ENCODE measurements at regions of chr9 and their contacts with region 1.

Region 1: GRCh38 chr9:120635011-120635410 is 55.0 kb upstream of the CDK5RAP2 start:
- DNase-seq: no peak
- H3K4me3 ChIP-seq: no peak overlapping the region
- H3K27ac ChIP-seq: no peak overlapping the region
- H3K4me1 ChIP-seq: no peaks in the 10 kb centered on the region
- H3K27me3 ChIP-seq: no peaks in the 10 kb centered on the region
- CTCF ChIP-seq: no peak
- EP300 ChIP-seq: no peak
- POLR2A ChIP-seq: no peak

Region 2: GRCh38 chr9:120663950-120664349 is 28.9 kb after region 1 on chr9:
- in situ Hi-C with region 1: no loop called
- intact Hi-C with region 1: loop called (anchors 2 kb)
- DNase-seq: no peak
- H3K4me3 ChIP-seq: no peak overlapping the region
- H3K27ac ChIP-seq: no peak overlapping the region
- H3K4me1 ChIP-seq: peaks cover 0 to 15% (median 2%) of the 10 kb centered on the region in 4 donors
- H3K27me3 ChIP-seq: no peaks in the 10 kb centered on the region
- CTCF ChIP-seq: no peak
- EP300 ChIP-seq: no peak
- POLR2A ChIP-seq: no peak

Measured in transverse colon (tissue), 4 donors.